GM10248 (cell line): ENCODE measurements at regions of chr11 and their contacts with region 1.

Region 1: DNA sequence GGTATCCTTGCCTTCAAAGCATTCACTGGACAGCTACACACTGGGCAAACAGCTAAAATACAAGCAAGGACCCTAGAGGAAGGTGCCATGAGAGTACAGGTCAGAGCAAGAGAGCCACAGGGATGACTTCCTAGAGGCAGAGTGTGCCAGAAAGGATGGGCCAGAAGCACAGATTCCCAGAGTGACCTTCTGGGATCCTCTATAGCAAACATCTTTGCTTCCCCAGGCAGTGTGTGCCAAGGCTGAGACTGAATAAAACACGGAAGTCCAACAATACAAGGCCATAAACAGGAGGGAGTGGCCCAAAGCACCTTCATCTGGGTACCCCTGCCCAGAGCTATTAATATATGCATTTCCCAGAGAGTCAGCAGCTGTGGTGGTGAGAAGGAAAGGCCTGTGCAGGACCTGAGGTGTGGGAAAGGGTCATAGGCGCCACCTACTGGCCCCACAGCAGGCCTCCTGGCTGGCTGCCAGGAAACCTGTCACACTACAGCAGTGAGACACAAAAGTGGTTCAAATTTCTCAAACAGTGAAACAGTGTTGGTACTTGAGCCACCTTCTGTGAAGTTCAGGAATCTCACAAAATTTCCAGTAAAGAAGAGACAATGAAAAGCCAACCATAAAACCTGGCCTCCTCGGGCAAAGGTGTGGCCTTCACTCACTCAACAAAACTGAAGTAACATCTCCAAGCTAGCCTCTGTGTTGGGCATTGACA is 20.3 kb downstream of the CLPB start:
- DNase-seq: peak; percentile 83
- CTCF ChIP-seq: peak; percentile 82

Region 2: DNA sequence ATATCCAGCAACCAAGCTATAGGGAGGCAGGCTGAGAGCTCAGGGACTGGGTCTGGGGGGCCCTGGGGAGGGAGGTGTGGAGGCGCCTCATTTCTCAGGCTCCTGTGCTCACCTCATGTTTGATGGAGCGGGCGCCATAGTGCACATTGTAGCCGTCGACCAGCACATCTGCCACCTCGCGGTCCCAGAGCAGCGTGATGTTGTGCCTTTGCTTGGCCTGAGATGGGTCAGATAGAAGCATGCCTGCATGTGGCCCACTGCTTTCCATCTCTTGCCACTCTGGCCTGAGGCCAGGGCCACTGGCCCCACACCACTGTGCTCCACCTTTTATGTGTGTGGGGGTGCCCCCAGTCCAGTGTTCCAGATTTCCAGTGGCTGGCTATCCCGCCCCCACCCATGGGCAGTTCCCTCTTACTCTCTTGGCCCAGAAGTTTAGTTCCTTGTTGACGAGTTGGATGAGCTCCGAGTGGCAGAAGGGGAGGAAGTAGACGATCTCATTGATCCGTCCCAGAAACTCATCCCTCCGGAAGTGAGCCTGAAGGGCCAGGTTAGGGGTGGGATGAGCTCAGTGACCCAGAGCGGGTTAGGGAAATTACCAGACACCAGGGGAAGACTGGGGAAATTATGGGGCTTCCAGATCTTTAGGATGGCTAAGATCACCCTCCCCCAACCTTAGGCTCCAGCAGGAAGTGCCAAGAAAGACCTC is 120.0 kb before region 1 on chr11:
- CTCF ChIA-PET with region 1: interaction called, 13 read pairs
- POLR2A ChIA-PET with region 1: no interaction called
- DNase-seq: no peak
- CTCF ChIP-seq: no peak

Region 3: DNA sequence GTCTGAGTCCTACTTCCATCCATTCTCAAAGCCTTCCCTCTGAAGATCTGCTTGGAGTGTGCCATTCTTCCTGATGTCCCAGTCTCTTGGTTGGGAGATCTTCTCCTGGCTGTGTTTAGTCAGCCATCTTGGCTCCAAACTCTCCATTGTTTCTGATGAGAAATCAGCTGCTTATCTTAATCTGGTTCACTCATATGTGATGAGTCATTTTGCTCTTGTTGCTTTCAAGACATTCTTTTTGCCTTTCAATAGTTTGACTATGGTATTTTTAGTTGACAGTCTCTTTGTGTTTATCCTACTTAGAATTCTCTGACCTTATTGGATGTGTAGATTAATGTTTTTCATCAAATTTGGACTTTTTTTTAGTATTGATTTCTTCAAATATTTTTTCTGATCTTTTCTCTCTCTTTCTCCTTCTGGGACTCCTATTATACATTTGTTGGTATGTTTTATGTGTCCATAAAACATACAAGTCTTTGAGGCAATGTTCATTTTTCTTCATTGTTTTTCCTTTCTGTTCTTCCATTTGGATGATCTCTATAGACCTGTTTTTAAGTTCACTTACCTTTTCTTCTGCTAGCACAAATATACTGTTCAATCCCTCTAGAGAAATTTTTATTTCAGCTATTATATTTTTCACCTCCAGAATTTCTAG is 97.4 kb after region 1 on chr11:
- CTCF ChIA-PET with region 1: no interaction called
- POLR2A ChIA-PET with region 1: no interaction called
- DNase-seq: no peak
- CTCF ChIP-seq: no peak